ENCODE measurements at regions of chrX and their contacts with region 1.

Region 1: GRCh38 chrX:35890699-35891098 is 28.8 kb upstream of the CFAP47 start:
- DNase-seq: peak; percentile 21
- ATAC-seq: no peak

Region 2: GRCh38 chrX:36087366-36087765 is 196.7 kb after region 1 on chrX:
- intact Hi-C with region 1: no loop called
- DNase-seq: no peak
- ATAC-seq: no peak

Region 3: GRCh38 chrX:36867143-36867542 is 976.4 kb after region 1 on chrX:
- intact Hi-C with region 1: loop called in 1 of 2 experiments (anchors 5 kb)
- DNase-seq: no peak
- ATAC-seq: no peak

Measured in left cardiac atrium (tissue), 4 donors.